A673 (cell line): ENCODE measurements at regions of chr14 and their contacts with region 1.

Region 1: GRCh38 chr14:45083971-45084722 is at the start of gene PRPF39:
- DNase-seq: peak; percentile 97
- H3K4me3 ChIP-seq: peak within 1 kb of the TSS; percentile 83
- H3K27ac ChIP-seq: peak within 1 kb of the TSS; percentile 82
- H3K4me1 ChIP-seq: peaks cover 14% of the 10 kb centered on the region
- H3K27me3 ChIP-seq: no peaks in the 10 kb centered on the region
- CTCF ChIP-seq: no peak
- total RNA-seq, gene PRPF39: 57.4 and 63.6 TPM in 2 replicates

Region 2: GRCh38 chr14:44961604-44962333 is 122.4 kb before region 1 on chr14 and contains the starts of genes KLHL28 and TOGARAM1:
- CTCF ChIA-PET with region 1: no interaction called
- POLR2A ChIA-PET with region 1: no interaction called
- intact Hi-C with region 1: loop called (anchors 5 kb)
- DNase-seq: peak; percentile 100
- H3K4me3 ChIP-seq: peak within 1 kb of the TSS; percentile 76
- H3K27ac ChIP-seq: peak within 1 kb of the TSS; percentile 85
- H3K4me1 ChIP-seq: peaks cover 16% of the 10 kb centered on the region
- H3K27me3 ChIP-seq: no peaks in the 10 kb centered on the region
- CTCF ChIP-seq: no peak
- total RNA-seq, gene KLHL28: 10.0 and 10.6 TPM in 2 replicates
- total RNA-seq, gene TOGARAM1: 16.8 and 18.5 TPM in 2 replicates